Naive thymus-derived CD4-positive, alpha-beta T cell (primary cell): ENCODE measurements at regions of chr1 and their contacts with region 1.

Region 1: DNA sequence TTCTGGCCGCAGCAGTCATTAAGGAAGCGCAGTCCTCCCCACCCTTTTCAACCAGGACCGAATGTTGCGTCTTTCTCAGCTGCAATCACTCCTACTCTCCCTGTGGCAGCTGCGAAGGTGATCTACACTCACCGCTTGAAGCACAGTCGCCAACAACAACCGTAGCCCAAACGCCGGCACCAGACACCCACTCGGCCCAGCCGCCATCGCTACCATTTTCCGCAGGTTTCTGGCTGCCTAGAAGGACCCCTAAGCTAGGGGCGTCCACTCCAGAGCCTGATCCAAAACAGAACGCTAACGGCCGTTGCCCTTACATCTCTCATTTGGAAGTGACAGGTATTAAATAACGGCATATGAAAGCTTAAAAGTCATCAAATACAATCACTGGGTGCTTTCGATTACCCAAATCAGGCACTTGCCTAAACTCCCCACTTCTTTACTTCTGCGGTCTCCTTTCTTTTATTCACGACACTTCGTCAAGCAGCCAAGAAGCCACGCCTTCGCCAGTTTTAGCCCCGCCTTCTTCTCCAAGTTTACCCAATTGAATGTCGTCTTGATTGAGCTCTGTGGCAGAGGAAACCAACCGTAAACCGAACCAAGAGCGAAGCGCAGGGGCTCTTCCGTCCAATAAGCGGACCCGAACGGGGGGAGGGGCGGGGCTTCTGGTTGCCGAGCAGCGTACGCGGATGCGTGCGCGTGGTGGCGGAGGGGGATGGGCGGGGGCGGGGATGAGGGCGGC is at the start of gene SELENOF:
- DNase-seq: peak; percentile 94 to 100 (median 99)
- ATAC-seq: peak; percentile 93
- H3K4me3 ChIP-seq: peak within 1 kb of the TSS; percentile 96
- H3K4me3 Mint-ChIP-seq: no peak within 1 kb of the TSS
- H3K27ac ChIP-seq: peak within 1 kb of the TSS; percentile 89
- H3K27ac Mint-ChIP-seq: no peak within 1 kb of the TSS
- H3K4me1 ChIP-seq: peaks cover 15 to 32% of the 10 kb centered on the region in 2 donors
- H3K4me1 Mint-ChIP-seq: peaks cover 6 to 50% (median 43%) of the 10 kb centered on the region in 7 donors
- H3K27me3 ChIP-seq: no peaks in the 10 kb centered on the region
- H3K27me3 Mint-ChIP-seq: no peaks in the 10 kb centered on the region
- total RNA-seq, gene SELENOF: 109 to 196 (median 133) TPM

Region 2: GRCh38 chr1:86395771-86396497 is 518.1 kb before region 1 on chr1 and contains the start of gene ODF2L:
- CTCF ChIA-PET with region 1: no interaction called
- POLR2A ChIA-PET with region 1: interaction called, 5 read pairs
- intact Hi-C with region 1: loop called (anchors 1 kb)
- DNase-seq: peak; percentile 73 to 92 (median 90)
- ATAC-seq: peak; percentile 100
- H3K4me3 ChIP-seq: peak within 1 kb of the TSS; percentile 80
- H3K4me3 Mint-ChIP-seq: peak within 1 kb of the TSS; percentile 90 to 100 (median 98)
- H3K27ac ChIP-seq: peak within 1 kb of the TSS; percentile 90
- H3K27ac Mint-ChIP-seq: peak within 1 kb of the TSS; percentile 94 to 99 (median 98)
- H3K4me1 ChIP-seq: peaks cover 17 to 20% of the 10 kb centered on the region in 2 donors
- H3K4me1 Mint-ChIP-seq: peaks cover 23 to 70% (median 58%) of the 10 kb centered on the region in 7 donors
- H3K27me3 ChIP-seq: no peaks in the 10 kb centered on the region
- H3K27me3 Mint-ChIP-seq: peaks cover 0 to 7% (median 0%) of the 10 kb centered on the region in 5 donors
- total RNA-seq, gene ODF2L: 50.3 to 75.3 (median 52.2) TPM

Region 3: GRCh38 chr1:86741947-86742572 is 172.0 kb before region 1 on chr1:
- CTCF ChIA-PET with region 1: no interaction called
- POLR2A ChIA-PET with region 1: no interaction called
- intact Hi-C with region 1: loop called in 1 of 2 experiments (anchors 1 kb)
- DNase-seq: peak in 7 of 9 donors; percentile 12 to 43 (median 26)
- ATAC-seq: no peak
- H3K4me3 ChIP-seq: no peak overlapping the region
- H3K4me3 Mint-ChIP-seq: peak overlapping the region in 1 of 10 donors; percentile 60
- H3K27ac ChIP-seq: no peak overlapping the region
- H3K27ac Mint-ChIP-seq: no peak overlapping the region
- H3K4me1 ChIP-seq: peaks cover 5 to 12% of the 10 kb centered on the region in 2 donors
- H3K4me1 Mint-ChIP-seq: peaks cover 0 to 6% (median 0%) of the 10 kb centered on the region in 7 donors
- H3K27me3 ChIP-seq: no peaks in the 10 kb centered on the region
- H3K27me3 Mint-ChIP-seq: no peaks in the 10 kb centered on the region

Region 4: DNA sequence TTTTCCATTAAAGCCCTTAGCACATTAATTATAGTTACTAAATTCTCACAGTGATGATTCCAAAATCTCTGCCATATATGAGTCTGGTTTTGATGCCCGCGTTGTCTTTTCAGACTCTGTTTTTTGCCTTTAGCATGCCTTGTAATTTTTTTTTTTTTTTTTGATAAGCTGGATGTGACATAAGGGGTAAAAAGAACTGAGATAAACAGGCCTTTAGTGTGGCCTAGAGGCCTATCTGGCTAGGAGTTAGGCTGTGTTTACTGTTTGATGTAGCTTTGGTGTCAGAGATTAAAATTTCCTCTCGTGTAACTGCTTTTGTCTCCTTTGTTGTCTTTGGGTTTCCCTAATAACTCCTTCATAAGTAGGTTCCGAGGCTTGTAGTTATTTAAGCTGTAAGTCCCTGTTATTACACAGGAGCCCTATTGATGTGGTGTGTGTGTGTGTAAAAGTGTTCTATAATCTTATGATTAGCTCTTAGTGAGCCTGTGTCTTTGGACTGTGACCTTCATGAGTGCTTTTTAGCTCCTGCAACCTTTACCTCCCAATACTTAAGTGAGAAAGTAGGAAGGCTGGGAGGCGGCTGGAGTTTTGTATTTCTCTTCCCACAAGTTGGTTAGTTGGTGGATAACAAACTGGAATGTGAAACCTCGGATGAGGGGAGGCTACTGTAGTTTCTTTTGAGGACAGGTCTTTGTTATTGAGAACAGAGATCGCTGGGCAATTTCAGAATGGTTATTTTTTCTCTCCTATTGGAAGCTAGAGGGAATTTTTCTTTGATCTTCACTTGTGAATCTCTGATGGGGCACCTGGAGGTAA is 19.7 kb after region 1 on chr1:
- CTCF ChIA-PET with region 1: no interaction called
- POLR2A ChIA-PET with region 1: interaction called, 4 read pairs
- intact Hi-C with region 1: loop called in 1 of 2 experiments (anchors 1 kb)
- DNase-seq: peak in 3 of 9 donors; percentile 13 to 26 (median 26)
- ATAC-seq: peak; percentile 59
- H3K4me3 ChIP-seq: no peak overlapping the region
- H3K4me3 Mint-ChIP-seq: peak overlapping the region in 5 of 10 donors; percentile 5 to 38 (median 25)
- H3K27ac ChIP-seq: no peak overlapping the region
- H3K27ac Mint-ChIP-seq: peak overlapping the region in 8 of 9 donors; percentile 3 to 82 (median 58)
- H3K4me1 ChIP-seq: peaks cover 0 to 10% of the 10 kb centered on the region in 2 donors
- H3K4me1 Mint-ChIP-seq: peaks cover 4 to 54% (median 36%) of the 10 kb centered on the region in 7 donors
- H3K27me3 ChIP-seq: no peaks in the 10 kb centered on the region
- H3K27me3 Mint-ChIP-seq: no peaks in the 10 kb centered on the region

Region 5: GRCh38 chr1:87084244-87084836 is 170.3 kb after region 1 on chr1:
- CTCF ChIA-PET with region 1: interaction called, 3 read pairs
- POLR2A ChIA-PET with region 1: no interaction called
- intact Hi-C with region 1: loop called (anchors 1 to 2 kb)
- DNase-seq: peak in 6 of 9 donors; percentile 11 to 59 (median 44)
- ATAC-seq: peak; percentile 65
- H3K4me3 ChIP-seq: no peak overlapping the region
- H3K4me3 Mint-ChIP-seq: no peak overlapping the region
- H3K27ac ChIP-seq: no peak overlapping the region
- H3K27ac Mint-ChIP-seq: no peak overlapping the region
- H3K4me1 ChIP-seq: no peaks in the 10 kb centered on the region
- H3K4me1 Mint-ChIP-seq: peaks cover 0 to 6% (median 4%) of the 10 kb centered on the region in 7 donors
- H3K27me3 ChIP-seq: no peaks in the 10 kb centered on the region
- H3K27me3 Mint-ChIP-seq: no peaks in the 10 kb centered on the region

Region 6: DNA sequence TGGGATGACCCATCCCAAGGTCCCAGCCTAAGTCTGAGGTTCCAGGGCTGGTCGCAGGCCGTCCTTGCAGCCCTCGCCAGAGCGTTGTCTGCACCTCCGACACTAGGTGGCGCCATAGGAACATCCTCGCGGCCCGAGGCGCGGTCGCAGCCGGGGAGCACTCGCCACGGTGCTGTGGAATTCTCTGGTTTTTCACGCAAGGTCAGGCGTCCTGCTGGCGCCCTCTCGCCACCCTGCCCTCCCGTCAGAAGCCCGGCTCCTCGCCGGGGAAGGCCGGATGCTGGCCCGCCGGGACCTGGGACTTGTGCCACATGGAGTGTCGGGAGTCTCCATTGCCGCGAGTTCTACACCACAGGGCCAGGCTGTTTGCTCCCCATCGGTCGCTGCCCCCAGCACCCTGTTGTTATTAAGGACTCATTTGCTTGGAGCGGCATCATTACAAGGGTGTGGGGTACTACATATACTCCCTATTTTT is 217.8 kb after region 1 on chr1:
- CTCF ChIA-PET with region 1: no interaction called
- POLR2A ChIA-PET with region 1: no interaction called
- intact Hi-C with region 1: no loop called
- DNase-seq: peak; percentile 35 to 80 (median 69)
- ATAC-seq: peak; percentile 94
- H3K4me3 ChIP-seq: peak overlapping the region; percentile 90
- H3K4me3 Mint-ChIP-seq: peak overlapping the region; percentile 79 to 88 (median 83)
- H3K27ac ChIP-seq: no peak overlapping the region
- H3K27ac Mint-ChIP-seq: no peak overlapping the region
- H3K4me1 ChIP-seq: no peaks in the 10 kb centered on the region
- H3K4me1 Mint-ChIP-seq: peaks cover 0 to 13% (median 9%) of the 10 kb centered on the region in 7 donors
- H3K27me3 ChIP-seq: no peaks in the 10 kb centered on the region
- H3K27me3 Mint-ChIP-seq: peaks cover 34 to 43% (median 40%) of the 10 kb centered on the region in 5 donors